BJ (cell line): ENCODE measurements at regions of chr6 and their contacts with region 1.

Region 1: DNA sequence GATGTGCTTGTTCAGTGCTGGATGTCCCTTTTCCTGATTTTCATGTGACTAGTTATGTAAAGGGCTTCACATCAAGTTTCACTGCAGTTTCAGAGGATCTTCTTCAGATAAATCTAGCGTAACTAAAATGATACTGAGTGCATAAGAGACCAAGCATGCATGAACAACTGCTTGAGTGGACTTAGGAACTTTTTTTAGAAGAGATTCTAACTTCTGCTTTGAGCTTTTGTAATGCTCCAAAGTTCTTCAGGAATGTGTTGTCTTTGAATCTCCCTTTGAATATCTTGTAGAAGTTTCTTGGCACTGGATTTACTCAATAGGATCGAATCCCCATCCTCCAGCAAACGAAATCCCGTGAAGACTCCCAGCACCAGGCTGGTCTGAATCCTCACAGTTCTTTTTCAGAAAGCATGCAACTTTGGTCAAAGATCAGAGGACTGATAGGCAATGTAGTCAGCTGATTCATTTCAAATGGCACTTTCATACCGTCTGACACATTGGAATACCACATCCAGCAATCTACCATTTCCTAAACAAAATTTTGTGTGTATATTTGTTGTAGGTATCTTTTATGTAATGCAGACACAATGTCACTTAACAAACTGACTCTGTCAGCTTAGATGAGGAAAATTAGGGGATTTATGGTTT is 33.2 kb downstream of the ENPP1 start:
- DNase-seq: no peak
- H3K4me3 ChIP-seq: no peak overlapping the region
- H3K27me3 ChIP-seq: no peaks in the 10 kb centered on the region
- CTCF ChIP-seq: no peak

Region 2: GRCh38 chr6:131858765-131859415 is 17.8 kb after region 1 on chr6:
- CTCF ChIA-PET with region 1: interaction called, 10 read pairs
- POLR2A ChIA-PET with region 1: no interaction called
- DNase-seq: peak; percentile 49
- H3K4me3 ChIP-seq: no peak overlapping the region
- H3K27me3 ChIP-seq: no peaks in the 10 kb centered on the region
- CTCF ChIP-seq: no peak